SK-N-SH (cell line): ENCODE measurements at regions of chr5 and their contacts with region 1.

Region 1: DNA sequence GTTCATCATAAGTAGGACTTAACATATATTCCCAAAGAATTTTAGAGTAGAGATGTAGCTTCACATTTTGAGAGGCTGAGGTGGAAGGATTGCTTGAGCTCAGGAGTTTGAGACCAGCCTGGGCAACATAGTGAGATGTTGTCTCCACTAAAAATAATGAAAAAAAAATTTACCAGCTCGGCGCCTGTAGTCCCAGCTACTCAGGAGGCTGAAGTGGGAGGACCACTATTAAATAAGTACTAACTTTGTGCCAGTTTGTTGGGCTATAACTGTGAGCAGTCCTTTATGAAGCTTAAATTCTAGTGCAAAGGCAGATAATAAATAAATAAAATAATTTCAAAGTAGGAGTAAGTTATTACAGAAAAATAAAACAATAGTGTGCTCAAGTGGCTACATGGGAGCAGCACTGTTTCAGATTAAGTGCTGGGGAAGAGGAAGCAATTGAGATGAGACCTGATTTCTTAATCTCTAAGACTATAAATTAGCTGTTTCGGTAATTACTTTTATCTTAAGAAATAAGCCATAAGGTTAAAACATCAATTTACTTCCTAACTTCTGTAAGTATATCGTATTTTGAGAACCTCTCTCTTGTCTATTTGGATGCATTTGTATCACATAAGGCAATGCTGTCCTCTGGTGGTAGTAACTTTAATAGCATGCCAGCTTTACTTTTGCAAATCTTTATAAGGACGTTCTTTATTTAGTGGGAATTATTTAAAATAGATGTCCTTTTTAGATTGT is 98.9 kb downstream of the CSNK1G3 start:
- DNase-seq: peak; percentile 23
- H3K4me3 ChIP-seq: no peak overlapping the region
- H3K27ac ChIP-seq: no peak overlapping the region
- H3K4me1 ChIP-seq: no peaks in the 10 kb centered on the region
- H3K27me3 ChIP-seq: no peaks in the 10 kb centered on the region
- CTCF ChIP-seq: peak; percentile 99
- EP300 ChIP-seq: no peak
- RAD21 ChIP-seq: peak; percentile 94

Region 2: GRCh38 chr5:123511648-123512605 is 98.9 kb before region 1 on chr5 and contains the start of gene CSNK1G3:
- CTCF ChIA-PET with region 1: interaction called, 17 read pairs
- POLR2A ChIA-PET with region 1: no interaction called
- DNase-seq: peak; percentile 91
- H3K4me3 ChIP-seq: peak within 1 kb of the TSS; percentile 63 to 82
- H3K27ac ChIP-seq: peak within 1 kb of the TSS; percentile 82 to 96
- H3K4me1 ChIP-seq: peaks cover 0 to 16% of the 10 kb centered on the region in 2 experiments; a peak in 3 of 4 replicates
- H3K27me3 ChIP-seq: no peaks in the 10 kb centered on the region
- CTCF ChIP-seq: no peak
- EP300 ChIP-seq: no peak; a peak in 1 of 4 replicates
- RAD21 ChIP-seq: peak; percentile 2; the same call in 1 of the 2 replicates
- polyA plus RNA-seq, gene CSNK1G3: 12.9 and 13.1 TPM in 2 replicates

Region 3: DNA sequence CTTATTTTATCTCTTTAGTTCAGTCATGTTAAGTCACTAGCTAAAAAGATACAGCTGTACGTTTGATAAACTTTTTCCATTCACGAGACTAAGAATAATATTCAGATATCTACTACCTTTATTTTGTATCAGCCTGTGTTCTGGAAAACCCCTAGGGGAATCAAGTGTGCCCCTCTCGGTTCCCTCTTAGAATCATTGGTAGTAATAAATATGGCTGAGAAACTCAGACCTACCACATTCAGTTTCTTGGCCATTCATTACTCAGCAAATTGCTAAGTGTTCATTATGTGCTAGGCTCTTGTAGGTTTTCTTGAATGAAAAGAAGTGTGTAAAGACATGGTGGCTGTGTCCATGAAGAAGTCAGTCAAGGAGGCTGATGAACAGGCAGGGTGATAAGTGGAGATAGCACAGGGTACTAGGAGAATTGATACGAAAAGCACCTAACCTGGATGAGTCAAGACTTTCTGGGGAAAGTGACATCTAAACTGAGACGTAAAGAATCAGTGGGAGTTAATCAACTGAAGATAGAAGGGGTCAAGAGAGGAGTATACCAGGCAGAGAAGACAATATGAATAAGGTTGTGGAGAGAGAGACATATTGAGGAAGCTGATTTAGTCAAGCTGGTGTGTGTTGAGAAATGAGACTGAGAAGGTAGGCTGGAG is 12.7 kb before region 1 on chr5:
- CTCF ChIA-PET with region 1: interaction called, 22 read pairs
- POLR2A ChIA-PET with region 1: no interaction called
- DNase-seq: no peak
- H3K4me3 ChIP-seq: no peak overlapping the region
- H3K27ac ChIP-seq: no peak overlapping the region
- H3K4me1 ChIP-seq: no peaks in the 10 kb centered on the region
- H3K27me3 ChIP-seq: no peaks in the 10 kb centered on the region
- CTCF ChIP-seq: no peak
- EP300 ChIP-seq: no peak
- RAD21 ChIP-seq: no peak

Region 4: DNA sequence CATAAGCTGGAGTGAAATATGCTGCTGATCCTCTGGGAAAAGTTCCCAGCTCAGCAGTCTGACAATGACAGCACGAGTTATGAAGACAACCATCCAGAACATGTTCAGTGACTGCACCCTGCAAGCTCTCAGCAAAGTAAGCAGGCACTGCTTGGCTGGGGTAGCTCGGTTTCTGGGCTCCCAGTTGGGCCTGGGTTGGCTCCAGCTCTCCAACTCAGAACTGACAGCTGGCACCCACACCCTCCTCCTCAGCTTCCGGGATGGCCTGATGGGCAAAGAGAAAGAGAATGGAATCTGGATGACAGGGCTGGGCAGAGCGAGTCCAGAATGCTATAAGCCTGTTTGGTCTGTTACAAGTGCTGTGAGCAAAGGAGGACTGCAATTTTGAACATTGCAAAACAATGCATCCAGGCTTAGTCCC is 86.1 kb after region 1 on chr5:
- CTCF ChIA-PET with region 1: no interaction called
- POLR2A ChIA-PET with region 1: no interaction called
- DNase-seq: no peak
- H3K4me3 ChIP-seq: no peak overlapping the region
- H3K27ac ChIP-seq: peak overlapping the region in 1 of 2 experiments; percentile 53; a peak in 3 of 4 replicates
- H3K4me1 ChIP-seq: peaks cover 0 to 21% of the 10 kb centered on the region in 2 experiments; a peak in 3 of 4 replicates
- H3K27me3 ChIP-seq: no peaks in the 10 kb centered on the region
- CTCF ChIP-seq: no peak
- EP300 ChIP-seq: no peak
- RAD21 ChIP-seq: no peak